ENCODE measurements at regions of chr6 and their contacts with region 1.

Region 1: GRCh38 chr6:142692942-142693341 is 252.0 kb downstream of the HIVEP2 start:
- DNase-seq: peak; percentile 57
- H3K4me3 ChIP-seq: no peak overlapping the region
- H3K27ac ChIP-seq: no peak overlapping the region
- H3K4me1 ChIP-seq: peaks cover 0 to 12% (median 5%) of the 10 kb centered on the region in 4 donors
- H3K27me3 ChIP-seq: no peaks in the 10 kb centered on the region
- CTCF ChIP-seq: peak; percentile 91 to 97 (median 92)
- EP300 ChIP-seq: no peak
- POLR2A ChIP-seq: no peak

Region 2: GRCh38 chr6:142885182-142885867 is 192.4 kb after region 1 on chr6:
- in situ Hi-C with region 1: loop called in 1 of 4 experiments (anchors 10 kb)
- intact Hi-C with region 1: no loop called
- DNase-seq: peak; percentile 15
- H3K4me3 ChIP-seq: peak overlapping the region in 3 of 4 donors; percentile 1 to 27 (median 13)
- H3K27ac ChIP-seq: peak overlapping the region; percentile 45 to 60 (median 46)
- H3K4me1 ChIP-seq: peaks cover 6 to 28% (median 13%) of the 10 kb centered on the region in 4 donors
- H3K27me3 ChIP-seq: no peaks in the 10 kb centered on the region
- CTCF ChIP-seq: no peak
- EP300 ChIP-seq: peak; percentile 12
- POLR2A ChIP-seq: no peak

Region 3: DNA sequence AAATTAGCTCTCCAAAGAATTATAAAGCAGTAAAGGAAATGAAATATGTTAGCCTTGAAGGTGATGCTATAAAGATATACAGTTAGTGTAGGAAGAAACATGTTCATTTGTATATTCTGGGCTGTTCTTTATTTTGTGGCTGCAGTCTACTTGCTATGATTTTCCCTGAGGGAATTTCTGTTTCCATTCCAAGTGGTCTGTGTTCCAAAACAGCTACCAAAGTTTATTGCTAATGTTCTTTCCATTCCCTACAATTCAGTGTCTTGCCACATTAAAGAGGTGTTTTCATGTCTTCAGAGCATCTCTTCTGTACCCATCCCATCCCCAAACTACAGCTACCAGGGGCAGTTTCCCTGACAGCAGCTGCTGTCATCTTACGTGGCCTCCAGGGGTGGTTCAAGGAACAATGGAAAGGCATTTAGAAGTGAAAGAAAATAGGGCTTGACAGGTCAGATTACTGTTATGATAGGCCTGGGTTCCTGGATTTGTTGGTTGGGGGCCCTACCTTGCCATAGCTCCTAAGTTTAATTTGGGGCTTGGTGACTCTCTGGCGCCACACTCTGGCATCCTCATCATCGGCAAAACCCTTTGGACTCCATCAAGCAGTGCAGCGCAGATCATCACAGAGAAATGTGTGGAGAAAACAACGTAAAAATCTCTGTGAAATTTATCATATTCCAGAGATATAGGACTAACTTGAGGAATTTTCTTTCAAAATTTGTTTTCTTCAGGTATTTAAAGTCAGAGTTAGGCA is 333.9 kb after region 1 on chr6:
- in situ Hi-C with region 1: loop called (anchors 5 to 25 kb)
- intact Hi-C with region 1: loop called (anchors 5 kb)
- DNase-seq: peak; percentile 32
- H3K4me3 ChIP-seq: no peak overlapping the region
- H3K27ac ChIP-seq: no peak overlapping the region
- H3K4me1 ChIP-seq: no peaks in the 10 kb centered on the region
- H3K27me3 ChIP-seq: no peaks in the 10 kb centered on the region
- CTCF ChIP-seq: peak; percentile 50 to 65 (median 54)
- EP300 ChIP-seq: no peak
- POLR2A ChIP-seq: no peak

Region 4: DNA sequence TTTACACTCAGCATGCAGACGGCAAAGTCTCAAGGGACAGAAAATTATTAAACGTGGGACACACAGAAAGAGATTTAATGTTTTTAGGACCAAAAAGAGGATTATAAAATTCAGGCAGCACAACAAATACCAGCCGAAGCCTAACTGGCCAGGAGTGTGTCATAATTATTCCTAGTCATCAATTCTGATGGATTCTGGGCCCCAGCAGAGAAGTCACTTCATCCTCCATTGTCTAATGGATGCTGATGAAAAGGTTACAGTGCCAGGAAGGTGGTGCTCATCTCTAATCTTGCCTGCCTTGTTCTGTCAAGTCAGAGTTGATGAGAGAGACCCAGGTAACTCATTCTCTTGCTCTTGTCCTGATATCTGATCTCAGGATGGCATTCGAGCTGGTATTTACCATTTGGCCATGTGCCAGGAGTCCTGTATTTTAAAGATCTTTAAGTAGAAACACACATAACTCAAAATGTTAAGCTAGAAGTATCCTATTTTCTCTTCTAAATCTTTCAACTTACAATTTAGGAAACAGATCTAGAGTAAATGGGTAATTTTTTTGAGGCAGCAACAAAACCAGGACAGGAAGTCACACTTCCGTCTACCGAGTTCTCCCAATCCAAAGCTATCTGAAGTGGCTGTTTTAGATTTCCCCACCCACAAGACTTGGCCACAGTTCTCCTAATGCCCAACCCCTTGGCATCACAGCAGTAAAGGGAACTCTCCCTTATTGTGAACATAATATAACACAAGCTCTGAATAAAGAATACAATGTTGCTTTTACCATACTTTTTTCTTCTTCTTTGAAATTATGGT is 707.5 kb after region 1 on chr6:
- in situ Hi-C with region 1: loop called in 2 of 4 experiments (anchors 25 kb)
- intact Hi-C with region 1: no loop called
- DNase-seq: peak; percentile 23
- H3K4me3 ChIP-seq: no peak overlapping the region
- H3K27ac ChIP-seq: peak overlapping the region in 1 of 4 donors; percentile 3
- H3K4me1 ChIP-seq: peaks cover 0 to 26% (median 2%) of the 10 kb centered on the region in 4 donors
- H3K27me3 ChIP-seq: no peaks in the 10 kb centered on the region
- CTCF ChIP-seq: no peak
- EP300 ChIP-seq: no peak
- POLR2A ChIP-seq: no peak

Measured in transverse colon (tissue), 4 donors.